Mammary epithelial cell (primary cell): ENCODE measurements at regions of chr22 and their contacts with region 1.

Region 1: DNA sequence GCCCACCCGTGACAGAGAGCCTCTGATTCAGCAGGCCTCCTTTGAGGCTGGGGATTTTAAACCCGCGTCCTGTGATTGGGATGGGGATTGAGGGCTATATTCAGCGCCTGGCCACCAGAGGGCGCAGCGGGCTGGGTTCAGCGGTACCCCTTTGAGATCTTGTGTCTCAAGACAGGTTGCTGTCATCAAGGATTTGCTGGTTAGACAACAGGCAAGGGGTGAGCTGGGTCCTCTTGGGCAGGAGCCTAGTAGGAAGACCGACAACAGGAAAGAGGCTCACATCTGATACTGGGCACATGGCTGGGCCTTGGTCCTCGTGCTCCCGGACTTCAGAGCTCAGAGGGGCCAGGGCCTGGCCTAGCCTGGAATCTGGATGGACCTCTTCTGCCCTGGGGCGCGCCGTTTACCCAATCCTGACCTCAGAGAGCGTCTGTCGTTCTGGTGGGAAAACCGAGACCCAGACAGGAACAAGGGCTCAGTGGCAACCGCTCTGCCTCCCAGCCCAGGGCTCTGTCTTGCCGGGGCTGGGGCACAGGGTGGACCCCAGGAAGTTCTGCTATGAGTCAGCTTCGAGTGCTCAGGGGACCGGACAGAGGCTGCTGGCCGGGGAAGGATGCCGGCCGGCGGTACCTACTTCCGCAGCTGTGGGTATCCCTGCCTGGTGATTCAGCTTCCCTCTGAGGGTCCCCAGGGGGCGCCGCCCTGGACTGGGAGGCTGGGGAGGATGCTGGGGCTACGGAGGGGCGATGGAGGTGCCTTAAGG is 929 bp upstream of the SLC35E4 start:
- DNase-seq: peak; percentile 82
- H3K4me3 ChIP-seq: peak overlapping the region in 1 of 3 experiments; percentile 38
- H3K27ac ChIP-seq: no peak overlapping the region
- H3K4me1 ChIP-seq: peaks cover 27% of the 10 kb centered on the region
- H3K27me3 ChIP-seq: no peaks in the 10 kb centered on the region
- CTCF ChIP-seq: peak; percentile 93

Region 2: DNA sequence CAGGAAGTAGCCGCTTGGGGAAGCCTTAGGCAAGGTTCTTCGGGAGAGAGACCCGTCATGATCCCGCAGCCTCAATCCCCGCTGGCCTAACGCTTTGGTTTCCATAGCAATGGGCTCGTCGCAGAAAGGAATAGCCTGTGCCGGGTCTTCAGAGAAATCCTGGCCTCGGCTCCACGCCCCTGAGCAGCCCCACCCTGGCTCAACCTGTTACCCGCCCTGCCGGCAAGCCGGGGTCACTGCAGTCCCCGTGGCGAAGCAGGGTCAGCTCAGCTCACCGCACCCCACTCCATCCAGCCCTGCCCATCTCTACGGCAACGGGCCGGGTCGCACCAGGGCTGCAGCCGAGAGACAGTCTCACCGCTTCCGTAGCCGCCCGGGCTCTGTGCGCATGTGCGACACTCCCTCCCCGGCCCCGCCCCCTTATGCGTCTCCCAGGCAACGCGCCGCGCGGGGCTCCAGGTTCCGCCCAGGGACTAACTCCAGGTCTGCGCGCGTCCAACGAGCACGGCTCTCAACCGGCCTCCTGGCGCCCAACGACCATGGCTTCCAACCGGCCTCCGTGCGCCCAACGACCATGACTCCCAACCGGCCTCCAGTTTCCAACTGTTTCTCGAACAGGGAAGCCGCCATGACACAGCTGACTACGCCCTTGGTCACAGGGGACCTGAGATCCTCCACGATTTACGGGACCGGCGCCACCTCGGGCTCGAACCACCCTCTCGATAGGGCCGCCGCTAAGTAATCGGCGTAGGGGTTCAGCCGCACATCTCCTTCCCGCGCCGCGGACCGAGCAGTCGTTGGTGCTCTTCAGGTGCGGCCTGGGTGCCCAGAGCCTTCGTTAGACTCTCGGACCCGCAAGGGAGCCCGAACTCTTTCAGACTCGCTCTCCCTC is 33.1 kb after region 1 on chr22 and contains the start of gene DUSP18:
- CTCF ChIA-PET with region 1: no interaction called
- dilution Hi-C with region 1: no loop called
- in situ Hi-C with region 1: no loop called
- intact Hi-C with region 1: loop called (anchors 1 kb)
- DNase-seq: peak; percentile 93
- H3K4me3 ChIP-seq: peak within 1 kb of the TSS; percentile 66 to 76 (median 71)
- H3K27ac ChIP-seq: peak within 1 kb of the TSS; percentile 65
- H3K4me1 ChIP-seq: peaks cover 17% of the 10 kb centered on the region
- H3K27me3 ChIP-seq: no peaks in the 10 kb centered on the region
- CTCF ChIP-seq: peak; percentile 36 to 41
- total RNA-seq, gene DUSP18: 8.3 to 10.5 TPM

Region 3: GRCh38 chr22:30733181-30733631 is 98.6 kb after region 1 on chr22:
- CTCF ChIA-PET with region 1: no interaction called
- dilution Hi-C with region 1: no loop called
- in situ Hi-C with region 1: no loop called
- intact Hi-C with region 1: no loop called
- DNase-seq: no peak
- H3K4me3 ChIP-seq: no peak overlapping the region
- H3K27ac ChIP-seq: no peak overlapping the region
- H3K4me1 ChIP-seq: peaks cover 2% of the 10 kb centered on the region
- H3K27me3 ChIP-seq: peaks cover 2% of the 10 kb centered on the region
- CTCF ChIP-seq: no peak

Region 4: DNA sequence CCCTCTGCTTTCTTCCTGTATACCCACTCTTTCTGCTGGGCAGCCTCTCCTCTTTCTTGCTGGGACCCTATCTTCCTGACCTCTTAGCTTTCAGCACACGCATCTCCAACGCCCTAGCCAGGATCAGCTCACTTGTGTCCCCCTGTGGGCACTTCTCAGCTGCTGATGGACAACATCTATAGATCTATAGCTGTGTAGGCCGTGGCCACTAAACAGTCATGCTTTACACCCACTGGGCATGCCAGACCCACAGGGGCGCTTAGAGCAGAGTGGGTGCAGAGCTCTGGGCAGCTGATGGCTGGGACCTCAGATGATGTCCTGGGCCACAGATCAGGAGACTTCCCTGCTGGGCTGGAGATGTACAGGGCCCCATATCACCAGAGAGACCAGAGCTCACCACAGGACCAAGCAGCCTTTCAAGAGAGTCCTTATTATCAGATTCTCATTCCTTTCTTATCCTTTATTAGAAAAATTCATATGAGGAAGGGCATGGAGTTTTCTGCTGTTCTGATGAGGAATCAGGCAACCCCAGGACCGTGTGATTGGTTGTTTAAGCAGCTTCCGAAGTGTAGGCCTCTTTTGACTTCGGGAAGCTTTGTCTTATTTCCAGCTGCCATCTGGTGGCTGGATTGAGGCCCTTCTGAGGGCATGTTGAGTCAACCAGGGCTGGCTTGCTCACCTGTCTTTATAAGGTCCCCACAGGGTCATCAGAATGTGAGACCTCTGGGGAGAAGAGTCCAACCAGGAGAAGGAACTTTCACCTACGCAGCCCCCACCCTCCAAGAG is 120.5 kb after region 1 on chr22:
- CTCF ChIA-PET with region 1: interaction called, 34 read pairs
- dilution Hi-C with region 1: no loop called
- in situ Hi-C with region 1: loop called (anchors 5 kb)
- intact Hi-C with region 1: loop called (anchors 1 kb)
- DNase-seq: peak; percentile 65
- H3K4me3 ChIP-seq: no peak overlapping the region
- H3K27ac ChIP-seq: no peak overlapping the region
- H3K4me1 ChIP-seq: no peaks in the 10 kb centered on the region
- H3K27me3 ChIP-seq: no peaks in the 10 kb centered on the region
- CTCF ChIP-seq: peak; percentile 67 to 92

Region 5: GRCh38 chr22:30902496-30903357 is 268.1 kb after region 1 on chr22:
- CTCF ChIA-PET with region 1: no interaction called
- dilution Hi-C with region 1: no loop called
- in situ Hi-C with region 1: loop called (anchors 10 to 25 kb)
- intact Hi-C with region 1: no loop called
- DNase-seq: no peak
- H3K4me3 ChIP-seq: no peak overlapping the region
- H3K27ac ChIP-seq: no peak overlapping the region
- H3K4me1 ChIP-seq: no peaks in the 10 kb centered on the region
- H3K27me3 ChIP-seq: no peaks in the 10 kb centered on the region
- CTCF ChIP-seq: no peak

Region 6: DNA sequence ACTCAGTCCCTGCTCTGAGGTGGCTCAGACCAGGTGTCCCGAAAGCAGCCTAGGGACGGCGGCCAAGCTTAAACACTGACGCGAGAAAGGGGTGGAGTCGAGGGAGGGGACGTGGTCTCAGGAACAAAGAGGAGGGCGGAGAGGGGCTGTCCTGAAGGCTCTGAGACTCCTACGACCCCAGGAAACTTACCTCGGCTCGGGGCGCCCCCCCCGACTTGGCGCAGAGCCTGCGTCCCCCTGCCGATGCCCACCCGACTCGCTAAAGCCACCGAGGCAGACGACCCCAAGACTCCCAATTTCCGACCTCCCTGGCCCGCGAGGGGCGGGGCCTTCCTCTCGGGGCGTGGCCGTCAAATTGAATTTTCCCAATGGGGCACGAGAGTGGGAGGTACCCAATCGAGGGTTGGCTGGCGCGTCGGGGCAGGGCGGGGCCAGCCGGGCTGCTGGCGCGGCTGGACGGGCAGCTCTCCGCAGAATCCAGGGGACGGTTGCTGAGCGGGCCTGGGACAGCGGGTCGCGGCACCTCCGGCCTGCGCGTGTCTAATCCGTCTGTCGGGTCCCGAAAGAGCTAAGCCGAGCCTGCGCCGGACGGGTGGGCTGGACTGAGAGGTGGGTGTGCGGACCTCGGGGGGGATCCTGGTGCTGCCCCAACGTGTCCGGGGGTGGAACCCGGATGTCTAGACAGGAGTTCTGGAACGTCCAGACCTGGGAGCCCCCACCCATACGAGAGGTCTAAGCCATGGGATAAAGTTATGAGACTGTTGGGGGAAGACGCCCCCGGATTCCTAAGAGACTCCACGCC is 446.4 kb after region 1 on chr22 and contains the start of gene SMTN:
- CTCF ChIA-PET with region 1: no interaction called
- dilution Hi-C with region 1: no loop called
- in situ Hi-C with region 1: no loop called
- intact Hi-C with region 1: loop called (anchors 2 kb)
- DNase-seq: peak; percentile 90
- H3K4me3 ChIP-seq: peak within 1 kb of the TSS; percentile 79 to 91 (median 82)
- H3K27ac ChIP-seq: peak within 1 kb of the TSS; percentile 80
- H3K4me1 ChIP-seq: peaks cover 36% of the 10 kb centered on the region
- H3K27me3 ChIP-seq: no peaks in the 10 kb centered on the region
- CTCF ChIP-seq: no peak
- total RNA-seq, gene SMTN: 79.9 to 363 TPM